Mammary epithelial cell (primary cell): ENCODE measurements at regions of chr11 and their contacts with region 1.

Region 1: GRCh38 chr11:111601979-111602864 is at the start of gene SIK2:
- DNase-seq: peak; percentile 94
- H3K4me3 ChIP-seq: peak within 1 kb of the TSS; percentile 91 to 98 (median 98)
- H3K27ac ChIP-seq: peak within 1 kb of the TSS; percentile 94
- H3K4me1 ChIP-seq: peaks cover 21% of the 10 kb centered on the region
- H3K27me3 ChIP-seq: no peaks in the 10 kb centered on the region
- CTCF ChIP-seq: peak; percentile 79 to 97
- total RNA-seq, gene SIK2: 15.9 to 17.0 TPM

Region 2: GRCh38 chr11:111565114-111565720 is 37.0 kb before region 1 on chr11:
- CTCF ChIA-PET with region 1: no interaction called
- dilution Hi-C with region 1: no loop called
- in situ Hi-C with region 1: no loop called
- intact Hi-C with region 1: loop called (anchors 1 kb)
- DNase-seq: peak; percentile 53
- H3K4me3 ChIP-seq: no peak overlapping the region
- H3K27ac ChIP-seq: no peak overlapping the region
- H3K4me1 ChIP-seq: peaks cover 17% of the 10 kb centered on the region
- H3K27me3 ChIP-seq: no peaks in the 10 kb centered on the region
- CTCF ChIP-seq: peak; percentile 86

Region 3: DNA sequence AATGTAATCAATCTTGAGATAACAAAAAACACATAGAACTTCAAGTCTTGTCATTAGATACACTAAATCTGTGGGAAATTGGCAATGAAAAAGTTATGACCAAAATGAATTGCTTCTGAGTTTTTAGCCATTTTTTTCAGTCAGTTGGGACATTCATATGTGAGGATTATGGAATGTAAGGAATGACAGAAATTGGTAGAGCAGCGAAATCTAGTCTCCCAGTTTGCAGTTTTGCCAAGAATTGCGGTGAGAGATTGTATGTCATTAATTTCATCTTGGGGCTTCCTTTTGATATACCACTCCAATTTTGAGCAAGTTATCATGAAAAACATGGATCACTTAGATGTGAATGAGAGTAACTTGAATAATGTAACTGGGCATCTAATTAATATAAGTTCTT is 50.0 kb after region 1 on chr11:
- CTCF ChIA-PET with region 1: no interaction called
- dilution Hi-C with region 1: no loop called
- in situ Hi-C with region 1: no loop called
- intact Hi-C with region 1: loop called (anchors 1 kb)
- DNase-seq: no peak
- H3K4me3 ChIP-seq: no peak overlapping the region
- H3K27ac ChIP-seq: peak overlapping the region; percentile 75
- H3K4me1 ChIP-seq: peaks cover 14% of the 10 kb centered on the region
- H3K27me3 ChIP-seq: no peaks in the 10 kb centered on the region
- CTCF ChIP-seq: no peak

Region 4: GRCh38 chr11:111718436-111718835 is 116.2 kb after region 1 on chr11:
- CTCF ChIA-PET with region 1: no interaction called
- dilution Hi-C with region 1: no loop called
- in situ Hi-C with region 1: no loop called
- intact Hi-C with region 1: loop called (anchors 5 kb)
- DNase-seq: peak; percentile 68
- H3K4me3 ChIP-seq: no peak overlapping the region
- H3K27ac ChIP-seq: no peak overlapping the region
- H3K4me1 ChIP-seq: peaks cover 13% of the 10 kb centered on the region
- H3K27me3 ChIP-seq: no peaks in the 10 kb centered on the region
- CTCF ChIP-seq: no peak

Region 5: GRCh38 chr11:111766093-111766833 is 164.0 kb after region 1 on chr11 and contains the start of gene PPP2R1B:
- CTCF ChIA-PET with region 1: no interaction called
- dilution Hi-C with region 1: no loop called
- in situ Hi-C with region 1: no loop called
- intact Hi-C with region 1: loop called (anchors 1 kb)
- DNase-seq: peak; percentile 81
- H3K4me3 ChIP-seq: peak within 1 kb of the TSS; percentile 77 to 98 (median 97)
- H3K27ac ChIP-seq: peak within 1 kb of the TSS; percentile 78
- H3K4me1 ChIP-seq: peaks cover 19% of the 10 kb centered on the region
- H3K27me3 ChIP-seq: no peaks in the 10 kb centered on the region
- CTCF ChIP-seq: no peak
- total RNA-seq, gene PPP2R1B: 26.2 to 34.7 TPM

Region 6: GRCh38 chr11:111841370-111842053 is 239.3 kb after region 1 on chr11:
- CTCF ChIA-PET with region 1: no interaction called
- dilution Hi-C with region 1: no loop called
- in situ Hi-C with region 1: loop called (anchors 5 to 10 kb)
- intact Hi-C with region 1: loop called (anchors 1 kb)
- DNase-seq: peak; percentile 60
- H3K4me3 ChIP-seq: no peak overlapping the region
- H3K27ac ChIP-seq: no peak overlapping the region
- H3K4me1 ChIP-seq: no peaks in the 10 kb centered on the region
- H3K27me3 ChIP-seq: no peaks in the 10 kb centered on the region
- CTCF ChIP-seq: peak; percentile 87 to 88